ENCODE measurements at regions of chr1 and their contacts with region 1.

Region 1: DNA sequence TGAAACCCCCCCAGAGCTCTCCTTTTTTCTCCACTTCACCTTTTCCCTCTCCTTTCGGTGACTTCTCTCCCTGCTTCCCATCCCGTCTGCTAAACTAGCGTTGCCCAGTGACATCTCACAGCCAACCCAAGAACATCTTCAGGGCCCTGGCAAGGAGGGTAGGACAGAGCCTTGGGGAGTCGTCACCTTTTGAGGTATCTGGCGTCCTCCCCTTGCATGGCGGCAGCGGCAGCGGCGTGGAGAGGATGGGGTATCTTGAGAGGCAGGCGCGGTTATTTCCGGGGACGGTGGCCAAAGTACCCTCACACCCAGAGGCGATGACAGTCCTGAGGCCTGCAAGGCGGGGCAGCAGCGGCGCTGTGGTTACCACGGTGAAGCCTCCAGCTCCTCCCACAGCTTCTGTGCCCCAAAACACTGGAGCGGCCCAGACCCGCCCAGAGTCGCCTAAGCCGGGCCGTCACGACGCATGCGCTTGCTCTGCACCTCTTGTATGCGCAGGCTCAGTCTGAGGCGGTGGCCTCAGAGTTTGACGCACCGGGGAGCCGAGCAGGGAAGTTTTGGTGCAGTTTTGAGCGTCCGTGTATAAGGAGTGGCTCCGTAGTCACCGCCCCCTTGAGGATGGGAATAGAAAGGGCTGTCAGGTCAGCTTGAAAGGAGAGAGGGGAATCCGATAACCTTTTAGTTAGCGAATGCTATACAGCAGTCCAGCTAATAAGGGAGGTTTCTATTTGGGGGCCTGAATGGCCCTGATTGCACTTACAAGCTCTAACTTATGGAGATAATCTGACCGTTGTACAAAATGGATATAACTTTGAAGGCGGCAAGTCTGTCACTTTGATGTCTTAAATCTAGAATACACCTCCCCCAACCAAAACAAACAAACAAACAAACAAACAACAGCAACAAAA is at the start of gene KIFAP3:
- DNase-seq: peak; percentile 96
- H3K4me3 Mint-ChIP-seq: peak within 1 kb of the TSS; percentile 96
- H3K27ac Mint-ChIP-seq: peak within 1 kb of the TSS; percentile 94
- H3K4me1 Mint-ChIP-seq: peaks cover 28% of the 10 kb centered on the region
- H3K27me3 Mint-ChIP-seq: no peaks in the 10 kb centered on the region
- total RNA-seq, gene KIFAP3: 15.1 and 15.5 TPM in 2 replicates

Region 2: DNA sequence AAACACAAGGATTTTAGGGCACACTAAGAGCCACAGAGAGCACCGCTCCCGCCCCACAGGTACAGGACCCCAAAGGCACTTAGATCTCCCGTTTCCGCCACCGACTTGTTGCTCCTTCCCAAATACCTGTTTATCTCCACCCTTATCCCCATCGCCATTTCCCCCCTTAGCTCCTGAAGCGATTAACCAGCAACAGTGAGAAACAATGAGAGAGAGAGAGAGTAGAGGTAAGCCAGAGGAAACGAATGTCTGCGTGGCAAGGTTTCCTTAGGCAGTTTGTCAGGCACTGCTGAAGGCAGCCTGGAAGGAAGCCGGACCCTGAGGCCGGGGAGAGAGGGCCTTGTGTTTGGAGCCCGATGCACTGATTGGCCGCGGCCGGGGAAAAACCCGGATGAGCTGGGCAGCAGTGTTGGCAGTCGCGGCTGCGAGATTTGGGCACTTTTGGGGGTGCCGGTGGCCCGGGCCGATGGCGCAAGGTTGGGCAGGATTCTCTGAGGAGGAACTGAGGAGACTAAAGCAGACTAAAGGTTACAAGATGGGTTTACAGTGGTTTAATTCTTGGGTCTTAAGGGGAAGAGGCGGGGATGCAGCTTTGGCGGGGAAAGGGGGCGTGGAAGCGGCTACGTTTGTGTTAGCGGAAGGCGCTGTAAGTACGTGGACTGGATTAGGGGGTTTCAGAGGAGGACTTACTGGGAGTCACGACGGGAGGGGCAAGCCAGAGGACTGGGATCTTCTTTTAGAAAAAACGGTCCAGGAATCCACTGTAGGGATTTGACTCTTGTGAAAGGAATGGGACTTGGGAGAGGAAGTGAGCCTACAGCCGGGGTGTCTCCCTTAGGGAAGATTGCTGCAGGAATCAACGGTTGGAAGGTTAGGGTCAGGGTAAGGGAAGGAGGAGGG is 457.5 kb after region 1 on chr1 and contains the start of gene GORAB:
- intact Hi-C with region 1: loop called (anchors 1 kb)
- DNase-seq: peak; percentile 84
- H3K4me3 Mint-ChIP-seq: no peak within 1 kb of the TSS
- H3K27ac Mint-ChIP-seq: no peak within 1 kb of the TSS
- H3K4me1 Mint-ChIP-seq: peaks cover 6% of the 10 kb centered on the region
- H3K27me3 Mint-ChIP-seq: peaks cover 12% of the 10 kb centered on the region
- total RNA-seq, gene GORAB: 10.1 and 12.3 TPM in 2 replicates